ENCODE measurements at regions of chr12 and their contacts with region 1.

Region 1: DNA sequence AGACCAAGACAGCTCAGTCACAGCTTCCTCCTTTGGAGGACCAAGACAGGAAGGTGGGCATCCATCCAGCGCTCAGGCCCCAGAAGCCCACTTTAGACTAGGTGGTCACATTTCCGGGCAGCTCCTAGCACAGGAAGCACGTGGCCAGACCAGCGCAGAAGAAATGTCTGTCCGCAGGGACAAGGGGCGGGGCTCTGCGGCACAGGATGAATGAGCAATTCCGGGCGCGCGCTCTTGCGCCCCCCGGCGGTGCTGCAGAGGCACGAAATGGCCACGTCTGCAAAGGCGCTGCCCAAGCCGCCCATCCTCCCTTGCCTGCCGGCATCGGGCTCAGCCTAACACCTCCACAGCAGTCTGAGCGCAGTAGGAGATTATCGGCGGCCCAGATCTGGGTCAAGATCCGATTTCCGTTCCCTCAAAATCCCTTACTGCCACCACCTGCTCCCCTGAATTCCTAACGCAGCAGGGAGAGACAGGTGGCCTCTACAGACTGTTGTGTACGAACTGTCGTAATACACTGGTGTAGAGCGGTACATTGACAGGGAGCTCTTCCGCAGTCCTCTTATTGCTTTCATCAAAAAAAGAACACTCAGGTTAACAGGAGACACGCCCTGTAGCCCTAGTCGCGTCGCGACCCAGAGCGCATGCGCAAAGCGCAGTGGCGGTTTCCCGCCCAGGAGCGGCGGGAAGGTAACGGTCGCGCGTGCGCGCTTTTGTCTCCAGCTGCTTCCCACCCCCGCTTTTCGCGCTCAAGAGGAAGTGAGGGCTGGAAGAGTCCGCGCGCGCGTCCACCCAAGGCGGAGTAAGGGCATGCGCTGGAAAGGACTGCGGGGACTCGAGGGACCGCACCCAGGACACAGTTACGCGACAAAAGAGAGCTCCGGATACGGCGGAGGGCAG is 794 bp downstream of the TUBA1B start:
- DNase-seq: peak; percentile 91
- ATAC-seq: peak; percentile 50
- H3K4me3 Mint-ChIP-seq: peak overlapping the region; percentile 96
- H3K27ac Mint-ChIP-seq: peak overlapping the region; percentile 98
- H3K4me1 Mint-ChIP-seq: peaks cover 55% of the 10 kb centered on the region
- H3K27me3 Mint-ChIP-seq: no peaks in the 10 kb centered on the region
- CTCF ChIP-seq: no peak

Region 2: DNA sequence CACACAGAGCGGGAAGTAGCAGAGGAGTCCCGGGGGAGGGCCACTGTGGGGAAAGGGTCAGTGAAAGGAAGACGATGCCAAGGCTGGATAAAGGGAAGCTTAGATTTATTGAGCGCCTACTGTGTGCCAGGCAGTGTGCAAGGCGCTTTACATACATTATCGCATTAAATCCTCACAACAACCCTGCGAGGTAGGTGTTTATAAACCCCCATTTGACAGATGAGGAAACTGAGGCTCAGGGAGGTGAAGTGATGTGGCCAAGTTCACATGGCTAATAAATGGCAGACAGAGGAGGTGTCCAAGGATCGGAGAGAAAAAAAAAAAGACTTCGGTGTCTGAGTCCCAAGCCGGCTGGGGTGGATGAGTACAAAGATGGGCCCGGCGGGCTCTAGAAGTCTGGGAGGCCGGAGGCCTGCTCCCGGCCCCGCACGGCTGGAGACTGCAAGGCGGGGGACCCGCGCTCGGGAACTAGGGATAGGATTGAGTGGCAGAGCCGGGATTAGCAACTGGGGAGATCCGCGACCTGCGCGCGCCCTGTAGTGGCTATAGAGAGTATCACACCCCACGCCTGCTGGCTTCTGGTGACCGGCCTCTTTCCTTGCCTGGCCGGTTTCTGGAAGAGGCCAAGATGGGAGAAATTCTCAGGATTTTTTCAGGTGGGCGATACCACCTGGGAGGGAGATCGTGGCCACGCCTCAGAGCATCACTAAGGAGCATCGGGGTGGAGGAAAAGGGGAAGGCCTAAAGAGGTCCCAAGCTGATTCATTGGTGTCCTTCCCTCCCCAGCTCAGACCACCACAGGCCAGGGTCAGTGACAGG is 135.1 kb before region 1 on chr12:
- CTCF ChIA-PET with region 1: no interaction called
- POLR2A ChIA-PET with region 1: interaction called, 13 read pairs
- intact Hi-C with region 1: no loop called
- DNase-seq: no peak
- ATAC-seq: peak; percentile 23
- H3K4me3 Mint-ChIP-seq: peak overlapping the region; percentile 67
- H3K27ac Mint-ChIP-seq: no peak overlapping the region
- H3K4me1 Mint-ChIP-seq: peaks cover 38% of the 10 kb centered on the region
- H3K27me3 Mint-ChIP-seq: peaks cover 28% of the 10 kb centered on the region
- CTCF ChIP-seq: no peak

Region 3: GRCh38 chr12:49069507-49070346 is 60.7 kb before region 1 on chr12 and contains the start of gene RHEBL1:
- CTCF ChIA-PET with region 1: interaction called, 7 read pairs
- POLR2A ChIA-PET with region 1: interaction called, 34 read pairs
- intact Hi-C with region 1: loop called (anchors 1 kb)
- DNase-seq: peak; percentile 98
- ATAC-seq: peak; percentile 100
- H3K4me3 Mint-ChIP-seq: peak within 1 kb of the TSS; percentile 99
- H3K27ac Mint-ChIP-seq: peak within 1 kb of the TSS; percentile 93
- H3K4me1 Mint-ChIP-seq: peaks cover 15% of the 10 kb centered on the region
- H3K27me3 Mint-ChIP-seq: no peaks in the 10 kb centered on the region
- CTCF ChIP-seq: no peak
- total RNA-seq, gene RHEBL1: 3.2 and 3.3 TPM in 2 replicates

Region 4: GRCh38 chr12:49105608-49106007 is 24.8 kb before region 1 on chr12:
- CTCF ChIA-PET with region 1: interaction called, 21 read pairs
- POLR2A ChIA-PET with region 1: interaction called, 107 read pairs
- intact Hi-C with region 1: loop called (anchors 1 kb)
- DNase-seq: no peak
- ATAC-seq: no peak
- H3K4me3 Mint-ChIP-seq: no peak overlapping the region
- H3K27ac Mint-ChIP-seq: no peak overlapping the region
- H3K4me1 Mint-ChIP-seq: peaks cover 39% of the 10 kb centered on the region
- H3K27me3 Mint-ChIP-seq: no peaks in the 10 kb centered on the region
- CTCF ChIP-seq: no peak

Region 5: DNA sequence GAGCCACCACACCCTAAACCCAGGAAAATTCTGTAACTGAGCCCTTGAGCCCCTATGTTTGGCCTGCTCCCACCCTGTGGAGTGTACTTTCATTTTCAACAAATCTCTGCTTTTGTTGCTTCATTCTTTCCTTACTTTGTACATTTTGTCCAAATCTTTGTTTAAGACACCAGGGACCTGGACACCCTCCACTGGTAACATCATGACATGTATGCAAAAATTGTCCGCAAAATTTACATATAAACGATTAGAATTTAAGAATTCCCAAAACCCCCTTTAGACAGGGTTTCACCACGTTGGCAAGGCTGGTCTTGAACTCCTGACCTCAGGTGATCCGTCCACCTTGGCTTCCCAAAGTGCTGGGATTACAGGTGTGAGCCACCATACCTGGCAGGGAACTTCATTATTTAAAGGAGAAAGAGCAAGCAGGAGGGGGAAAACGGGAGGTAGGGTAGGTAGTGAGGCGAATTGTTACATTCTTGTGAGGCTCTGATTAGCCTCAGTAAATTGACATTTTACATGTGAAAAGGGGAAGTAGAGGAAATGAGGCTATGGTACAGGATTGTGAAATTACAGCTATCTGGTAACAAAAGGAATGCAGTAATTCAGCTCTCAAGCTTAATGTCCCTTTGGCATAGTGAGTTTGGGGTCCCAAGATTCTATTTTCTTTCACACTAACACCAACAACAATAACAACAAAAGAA is 30.8 kb after region 1 on chr12:
- CTCF ChIA-PET with region 1: no interaction called
- POLR2A ChIA-PET with region 1: interaction called, 58 read pairs
- intact Hi-C with region 1: loop called (anchors 2 kb)
- DNase-seq: no peak
- ATAC-seq: peak; percentile 54
- H3K4me3 Mint-ChIP-seq: peak overlapping the region; percentile 53
- H3K27ac Mint-ChIP-seq: peak overlapping the region; percentile 90
- H3K4me1 Mint-ChIP-seq: peaks cover 37% of the 10 kb centered on the region
- H3K27me3 Mint-ChIP-seq: no peaks in the 10 kb centered on the region
- CTCF ChIP-seq: no peak

Region 6: GRCh38 chr12:49232940-49233841 is 102.8 kb after region 1 on chr12:
- CTCF ChIA-PET with region 1: interaction called, 20 read pairs
- POLR2A ChIA-PET with region 1: interaction called, 78 read pairs
- intact Hi-C with region 1: loop called (anchors 1 kb)
- DNase-seq: no peak
- ATAC-seq: no peak
- H3K4me3 Mint-ChIP-seq: peak overlapping the region; percentile 93
- H3K27ac Mint-ChIP-seq: peak overlapping the region; percentile 89
- H3K4me1 Mint-ChIP-seq: peaks cover 15% of the 10 kb centered on the region
- H3K27me3 Mint-ChIP-seq: no peaks in the 10 kb centered on the region
- CTCF ChIP-seq: no peak

Measured in activated B cell treated with CpG ODN at 0.5 μM for 24 hours (primary cell).